ENCODE measurements at regions of chr15 and their contacts with region 1.

Region 1: DNA sequence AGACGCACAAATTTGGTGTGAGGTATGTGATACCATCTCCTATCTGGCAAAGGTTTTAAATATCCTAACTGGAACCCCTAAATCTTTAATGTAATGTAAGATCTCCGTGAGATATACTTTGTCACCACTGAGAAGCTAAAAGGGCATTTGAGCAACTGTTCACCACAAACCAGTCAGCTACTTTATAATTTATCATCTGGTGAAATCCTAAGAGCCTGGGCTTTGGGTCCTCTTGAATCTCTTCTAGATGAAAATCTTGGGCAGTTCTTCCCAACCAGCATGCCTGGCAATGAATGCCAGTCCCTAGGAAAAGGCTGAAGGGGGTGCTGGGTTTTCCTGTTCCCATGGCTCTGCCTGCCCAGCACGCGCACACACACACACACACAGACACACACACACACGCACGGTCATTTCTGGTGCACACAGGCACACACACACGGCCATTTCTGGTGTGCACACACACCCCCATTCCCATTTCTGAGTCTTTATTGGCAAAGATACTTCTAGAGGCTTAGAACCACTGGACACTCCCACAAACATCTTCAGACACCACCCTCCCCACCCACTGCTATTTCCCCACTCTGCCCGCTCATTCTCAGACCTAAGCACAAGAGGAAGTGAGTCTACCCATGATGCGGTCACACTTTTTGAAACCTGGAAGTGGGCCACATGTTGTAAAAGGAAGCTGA is 72.6 kb downstream of the MYO1E start:
- DNase-seq: peak; percentile 75 to 93
- H3K4me3 ChIP-seq: no peak overlapping the region
- H3K27ac ChIP-seq: peak overlapping the region; percentile 97
- H3K4me1 ChIP-seq: peaks cover 99% of the 10 kb centered on the region
- H3K27me3 ChIP-seq: no peaks in the 10 kb centered on the region
- CTCF ChIP-seq: no peak

Region 2: GRCh38 chr15:58933281-58934113 is 366.6 kb before region 1 on chr15 and contains the start of gene SLTM:
- CTCF ChIA-PET with region 1: no interaction called
- POLR2A ChIA-PET with region 1: no interaction called
- intact Hi-C with region 1: loop called (anchors 5 kb)
- DNase-seq: peak; percentile 85 to 89
- H3K4me3 ChIP-seq: peak within 1 kb of the TSS; percentile 96
- H3K27ac ChIP-seq: peak within 1 kb of the TSS; percentile 98
- H3K4me1 ChIP-seq: peaks cover 21% of the 10 kb centered on the region
- H3K27me3 ChIP-seq: no peaks in the 10 kb centered on the region
- CTCF ChIP-seq: peak; percentile 46; the same call in 1 of the 2 replicates
- total RNA-seq, gene SLTM: 81.4 and 110 TPM in 2 replicates

Region 3: DNA sequence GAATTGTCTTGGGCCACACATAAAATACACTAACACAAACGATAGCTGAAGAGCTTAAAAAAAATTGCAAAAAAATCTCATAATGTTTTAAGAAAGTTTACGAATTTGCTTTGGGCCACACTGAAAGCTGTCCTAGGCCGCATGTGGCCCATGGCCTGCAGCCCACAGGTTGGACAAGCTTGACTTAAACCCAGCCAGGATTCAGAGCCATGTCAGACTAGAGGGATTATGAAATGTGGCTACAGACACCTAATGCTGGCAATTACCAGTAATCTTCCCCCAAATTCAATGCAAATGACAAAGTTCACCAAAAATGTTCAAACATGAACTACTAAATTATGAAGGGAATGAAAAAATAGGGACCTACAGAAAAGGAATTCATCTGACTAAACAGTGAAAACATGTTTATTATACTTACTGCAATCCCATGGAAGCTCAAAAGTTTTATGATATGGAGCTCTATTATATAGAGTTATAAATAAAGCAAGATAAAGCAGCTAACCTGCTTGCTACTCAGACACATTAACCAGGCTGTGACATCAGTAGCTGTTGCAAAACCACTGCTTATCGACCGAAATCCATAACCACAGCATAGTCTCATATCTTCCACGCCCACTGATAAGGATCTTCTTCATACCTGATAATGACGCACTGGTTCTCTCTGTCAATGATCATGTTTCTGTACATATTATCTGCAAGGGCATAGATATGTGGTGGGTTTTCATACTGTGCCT is 44.3 kb before region 1 on chr15:
- CTCF ChIA-PET with region 1: no interaction called
- POLR2A ChIA-PET with region 1: interaction called, 5 read pairs
- intact Hi-C with region 1: loop called (anchors 1 kb)
- DNase-seq: peak; percentile 46 to 93
- H3K4me3 ChIP-seq: no peak overlapping the region
- H3K27ac ChIP-seq: peak overlapping the region; percentile 90
- H3K4me1 ChIP-seq: peaks cover 65% of the 10 kb centered on the region
- H3K27me3 ChIP-seq: no peaks in the 10 kb centered on the region
- CTCF ChIP-seq: no peak

Region 4: DNA sequence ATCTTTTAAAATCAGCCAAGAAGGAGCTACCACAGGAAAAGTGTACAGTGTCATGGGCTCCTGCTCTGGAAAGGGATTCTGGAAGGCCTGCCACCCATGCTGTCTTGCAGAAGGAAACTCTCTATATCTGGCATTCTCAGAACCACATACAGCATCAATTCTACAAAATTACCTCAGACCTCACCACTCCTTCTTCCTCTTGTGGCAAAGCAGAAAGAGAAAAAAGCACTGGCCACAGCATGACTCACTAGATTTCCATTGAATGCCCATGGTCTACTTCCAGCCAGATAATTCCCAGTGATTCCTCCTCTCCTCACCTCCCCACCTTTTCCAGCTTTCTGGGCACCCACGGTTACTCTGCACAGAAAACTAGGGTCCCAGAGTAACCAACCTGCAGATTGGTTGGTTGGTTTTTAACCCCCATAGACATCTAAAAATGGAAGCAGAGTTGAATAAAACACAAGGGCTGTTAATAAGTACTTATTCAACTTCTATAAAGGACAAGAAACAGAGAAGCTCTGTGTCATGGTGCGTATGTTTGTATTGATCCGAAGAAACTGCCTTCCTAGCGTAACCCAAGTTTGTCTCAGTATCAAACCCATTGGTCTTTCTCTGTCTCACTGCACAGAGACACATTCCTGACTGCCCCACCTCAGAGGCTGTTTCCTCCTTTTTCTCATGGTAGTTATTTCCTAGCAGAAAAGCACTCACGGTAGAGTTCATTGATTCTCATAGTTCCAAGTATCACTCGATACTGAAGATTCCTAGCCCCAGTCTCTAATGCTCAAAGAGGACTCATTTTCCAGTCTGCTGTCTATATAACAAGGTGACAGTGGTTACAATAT is 25.7 kb before region 1 on chr15:
- CTCF ChIA-PET with region 1: no interaction called
- POLR2A ChIA-PET with region 1: no interaction called
- intact Hi-C with region 1: loop called (anchors 1 kb)
- DNase-seq: peak in 1 of 2 experiments; percentile 54
- H3K4me3 ChIP-seq: no peak overlapping the region
- H3K27ac ChIP-seq: peak overlapping the region; percentile 98
- H3K4me1 ChIP-seq: peaks cover 73% of the 10 kb centered on the region
- H3K27me3 ChIP-seq: no peaks in the 10 kb centered on the region
- CTCF ChIP-seq: no peak

Region 5: DNA sequence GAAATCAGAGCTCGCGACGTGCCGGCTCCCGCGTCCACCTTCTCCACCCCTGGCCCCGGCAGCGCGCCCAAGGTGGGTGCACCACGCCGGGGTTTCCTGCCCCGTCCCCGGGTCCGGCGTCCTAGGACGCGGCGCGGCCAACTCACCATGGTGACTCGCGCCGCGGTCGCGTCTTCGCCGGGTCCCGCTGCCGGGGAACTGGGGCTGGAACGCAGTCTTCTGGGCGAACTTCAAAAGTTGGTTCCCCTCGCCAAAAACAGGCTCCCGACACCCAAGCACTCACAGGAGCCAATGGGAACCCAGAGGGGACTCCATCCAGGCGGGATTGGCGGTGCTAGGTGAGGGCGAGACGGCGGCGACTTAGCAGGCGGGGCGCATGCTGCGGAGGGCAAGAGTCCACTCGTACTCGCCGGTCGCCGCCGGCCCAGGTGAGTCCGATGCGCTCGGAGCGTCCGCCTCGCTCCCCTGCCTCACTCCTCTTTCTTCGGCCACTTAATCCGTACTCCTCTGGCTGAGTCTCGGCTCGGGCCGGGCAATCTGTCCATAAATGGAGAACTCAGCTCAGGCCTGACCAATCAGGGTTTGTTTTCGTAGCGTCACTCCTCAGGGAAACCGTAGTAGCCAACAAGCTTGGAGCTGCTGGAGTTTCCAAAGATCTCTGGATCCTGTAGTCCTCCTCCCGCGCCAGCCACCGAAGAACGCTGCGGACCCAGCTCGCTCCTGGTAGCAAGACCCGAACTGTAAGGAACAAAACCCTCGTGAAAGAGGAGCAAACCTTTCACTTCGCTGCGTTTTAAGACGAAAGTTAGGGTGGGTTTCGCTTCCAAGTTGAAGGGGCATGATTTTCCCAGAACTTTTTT is 72.5 kb after region 1 on chr15 and contains the start of gene MYO1E:
- CTCF ChIA-PET with region 1: no interaction called
- POLR2A ChIA-PET with region 1: interaction called, 18 read pairs
- intact Hi-C with region 1: loop called (anchors 5 kb)
- DNase-seq: peak; percentile 91
- H3K4me3 ChIP-seq: peak within 1 kb of the TSS; percentile 97
- H3K27ac ChIP-seq: peak within 1 kb of the TSS; percentile 89
- H3K4me1 ChIP-seq: peaks cover 30% of the 10 kb centered on the region
- H3K27me3 ChIP-seq: no peaks in the 10 kb centered on the region
- CTCF ChIP-seq: no peak
- total RNA-seq, gene MYO1E: 156 and 213 TPM in 2 replicates

Measured in PC-9 (cell line).